ENCODE measurements at regions of chr1 and their contacts with region 1.

Region 1: GRCh38 chr1:156383023-156383422 is 14.0 kb downstream of the RHBG start:
- DNase-seq: peak; percentile 75
- ATAC-seq: peak; percentile 81

Region 2: DNA sequence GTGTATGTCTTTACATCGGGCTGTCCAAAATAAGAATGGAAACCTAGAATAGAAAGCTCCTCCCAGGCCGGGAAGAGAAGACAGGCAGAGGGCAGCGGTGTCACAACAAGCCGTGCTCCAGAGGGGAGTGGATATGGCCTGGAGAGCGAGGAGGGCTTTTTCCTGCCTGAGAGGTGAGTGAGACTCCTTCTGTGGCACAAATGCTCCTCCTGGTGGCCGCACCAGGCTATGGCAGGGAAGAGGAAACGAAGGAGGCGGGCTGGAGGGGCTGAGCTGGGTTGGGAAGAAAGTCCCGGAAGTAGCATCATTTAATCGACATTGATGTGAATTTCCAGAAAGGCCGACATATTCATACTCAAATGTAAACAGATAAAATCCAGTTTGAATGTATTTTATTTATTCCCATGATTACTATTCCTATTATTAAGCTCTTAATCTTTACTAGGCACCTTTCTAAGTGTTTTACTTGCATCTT is 62.8 kb after region 1 on chr1:
- intact Hi-C with region 1: loop called (anchors 2 kb)
- DNase-seq: peak; percentile 88
- ATAC-seq: peak; percentile 87

Region 3: GRCh38 chr1:156601122-156601830 is 218.3 kb after region 1 on chr1 and contains the start of gene GPATCH4:
- intact Hi-C with region 1: loop called (anchors 10 kb)
- DNase-seq: peak; percentile 85
- ATAC-seq: peak; percentile 95
- total RNA-seq, gene GPATCH4: 19.7 TPM

Measured in sciatic nerve (tissue), 2 donors.